ENCODE measurements at regions of chr2 and their contacts with region 1.

Region 1: DNA sequence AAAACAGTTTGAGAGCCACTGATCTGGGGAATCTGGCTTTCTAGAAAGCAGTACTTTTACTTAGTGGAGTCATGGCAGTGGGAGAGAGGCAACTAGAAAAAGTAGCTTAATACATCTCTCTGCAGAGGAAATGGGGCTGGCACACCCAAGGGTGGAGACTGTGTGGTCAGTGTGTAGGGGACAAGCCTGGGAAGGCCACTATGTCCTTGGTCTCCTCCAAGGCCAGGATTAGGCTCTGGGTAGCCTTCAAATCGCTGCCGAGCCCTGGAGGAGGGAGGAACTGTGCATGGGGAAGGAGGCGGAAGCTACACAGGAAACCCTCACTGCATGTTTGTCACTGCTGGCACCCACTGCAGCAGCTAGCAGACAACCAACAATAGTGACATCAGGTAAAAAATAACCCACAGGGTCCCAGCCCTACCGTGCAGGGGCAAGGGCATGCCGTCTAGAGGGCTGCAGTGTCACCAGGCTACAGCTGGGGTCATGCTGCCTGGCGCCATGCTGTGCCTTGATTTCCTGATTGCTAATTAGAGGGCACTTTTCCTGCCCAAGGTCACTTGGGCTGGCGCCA is 34.8 kb downstream of the LBH start:
- DNase-seq: peak; percentile 53 to 85
- ATAC-seq: peak; percentile 86 to 92 (median 91)
- H3K4me3 ChIP-seq: no peak overlapping the region
- H3K4me3 Mint-ChIP-seq: peak overlapping the region; percentile 89
- H3K27ac ChIP-seq: peak overlapping the region; percentile 79
- H3K27ac Mint-ChIP-seq: peak overlapping the region; percentile 93 to 94
- H3K4me1 ChIP-seq: peaks cover 38% of the 10 kb centered on the region
- H3K4me1 Mint-ChIP-seq: peaks cover 62 to 63% of the 10 kb centered on the region in 2 donors
- H3K27me3 ChIP-seq: no peaks in the 10 kb centered on the region
- H3K27me3 Mint-ChIP-seq: no peaks in the 10 kb centered on the region
- CTCF ChIP-seq: no peak

Region 2: GRCh38 chr2:30252723-30253701 is 13.1 kb before region 1 on chr2:
- intact Hi-C with region 1: loop called (anchors 1 kb)
- DNase-seq: peak; percentile 42 to 47
- ATAC-seq: peak; percentile 51 to 77 (median 66)
- H3K4me3 ChIP-seq: no peak overlapping the region
- H3K4me3 Mint-ChIP-seq: peak overlapping the region; percentile 63
- H3K27ac ChIP-seq: peak overlapping the region; percentile 67
- H3K27ac Mint-ChIP-seq: peak overlapping the region; percentile 89 to 93
- H3K4me1 ChIP-seq: peaks cover 60% of the 10 kb centered on the region
- H3K4me1 Mint-ChIP-seq: peaks cover 88 to 91% of the 10 kb centered on the region in 2 donors
- H3K27me3 ChIP-seq: no peaks in the 10 kb centered on the region
- H3K27me3 Mint-ChIP-seq: no peaks in the 10 kb centered on the region
- CTCF ChIP-seq: no peak

Region 3: GRCh38 chr2:30315391-30316063 is 49.4 kb after region 1 on chr2:
- intact Hi-C with region 1: loop called (anchors 1 kb)
- DNase-seq: peak in 1 of 2 donors; percentile 72
- ATAC-seq: peak; percentile 84 to 93 (median 85)
- H3K4me3 ChIP-seq: no peak overlapping the region
- H3K4me3 Mint-ChIP-seq: peak overlapping the region; percentile 48
- H3K27ac ChIP-seq: peak overlapping the region; percentile 15
- H3K27ac Mint-ChIP-seq: peak overlapping the region; percentile 76 to 85
- H3K4me1 ChIP-seq: peaks cover 30% of the 10 kb centered on the region
- H3K4me1 Mint-ChIP-seq: peaks cover 26 to 31% of the 10 kb centered on the region in 2 donors
- H3K27me3 ChIP-seq: no peaks in the 10 kb centered on the region
- H3K27me3 Mint-ChIP-seq: no peaks in the 10 kb centered on the region
- CTCF ChIP-seq: no peak

Region 4: DNA sequence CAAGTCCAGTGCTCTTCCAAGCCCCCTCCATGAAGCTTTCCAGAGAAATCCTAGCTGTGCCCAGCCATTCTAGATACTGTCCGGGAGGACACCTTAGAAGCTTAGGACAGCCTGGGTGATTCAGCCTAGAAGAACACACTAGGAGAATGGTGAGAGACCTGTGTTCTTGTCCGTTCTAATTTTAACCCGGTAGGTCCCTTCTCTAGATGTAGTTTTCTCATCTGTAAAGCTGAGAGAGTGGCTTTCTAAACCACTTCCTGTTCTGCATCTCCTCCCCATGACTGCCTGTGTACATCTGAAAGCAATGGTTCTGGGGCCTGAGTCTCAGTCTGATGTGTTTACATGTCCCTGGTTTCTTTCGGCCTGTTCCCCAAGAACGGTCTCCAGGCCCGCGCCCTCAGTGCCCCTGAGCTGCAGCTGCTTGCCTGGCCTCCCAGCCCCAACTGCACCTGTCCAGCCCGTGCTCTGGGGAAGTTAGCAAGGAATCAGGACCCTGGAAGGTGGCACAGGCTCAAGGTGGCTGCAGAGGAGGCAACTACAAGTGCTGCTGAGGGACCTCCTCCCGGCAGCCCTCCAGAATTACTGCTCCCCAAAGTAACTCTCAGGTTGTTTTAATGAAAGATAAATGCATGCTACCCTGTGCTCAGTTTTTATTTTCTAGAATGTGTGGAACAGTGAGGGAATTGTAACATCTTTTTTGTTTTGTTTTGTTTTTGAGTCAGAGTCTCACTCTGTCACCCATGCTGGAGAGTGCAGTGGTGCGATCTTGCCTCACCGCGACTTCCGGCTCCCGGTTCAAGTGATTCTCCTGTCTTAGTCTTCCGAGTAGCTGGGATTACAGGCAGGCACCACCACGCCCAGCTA is 71.1 kb after region 1 on chr2:
- intact Hi-C with region 1: loop called (anchors 2 kb)
- DNase-seq: peak; percentile 29 to 79
- ATAC-seq: peak; percentile 84 to 90 (median 90)
- H3K4me3 ChIP-seq: peak overlapping the region; percentile 1
- H3K4me3 Mint-ChIP-seq: peak overlapping the region; percentile 91
- H3K27ac ChIP-seq: peak overlapping the region; percentile 79
- H3K27ac Mint-ChIP-seq: peak overlapping the region; percentile 97 to 98
- H3K4me1 ChIP-seq: peaks cover 67% of the 10 kb centered on the region
- H3K4me1 Mint-ChIP-seq: peaks cover 58 to 66% of the 10 kb centered on the region in 2 donors
- H3K27me3 ChIP-seq: no peaks in the 10 kb centered on the region
- H3K27me3 Mint-ChIP-seq: no peaks in the 10 kb centered on the region
- CTCF ChIP-seq: no peak